Prostate gland (tissue), 2 donors: ENCODE measurements at regions of chr11 and their contacts with region 1.

Region 1: GRCh38 chr11:11848891-11849746 is 7.3 kb downstream of the USP47 start:
- DNase-seq: peak; percentile 47
- H3K4me3 ChIP-seq: no peak overlapping the region
- H3K27ac ChIP-seq: peak overlapping the region in 1 of 2 donors; percentile 2
- H3K4me1 ChIP-seq: peaks cover 16% of the 10 kb centered on the region
- H3K27me3 ChIP-seq: no peaks in the 10 kb centered on the region
- CTCF ChIP-seq: peak in 3 of 4 experiments; percentile 28 to 55 (median 46)
- POLR2A ChIP-seq: no peak

Region 2: GRCh38 chr11:11163236-11163635 is 685.9 kb before region 1 on chr11:
- intact Hi-C with region 1: no loop called
- DNase-seq: no peak
- H3K4me3 ChIP-seq: no peak overlapping the region
- H3K27ac ChIP-seq: no peak overlapping the region
- H3K4me1 ChIP-seq: no peaks in the 10 kb centered on the region
- H3K27me3 ChIP-seq: no peaks in the 10 kb centered on the region
- CTCF ChIP-seq: peak in 1 of 4 experiments; percentile 9
- POLR2A ChIP-seq: no peak

Region 3: DNA sequence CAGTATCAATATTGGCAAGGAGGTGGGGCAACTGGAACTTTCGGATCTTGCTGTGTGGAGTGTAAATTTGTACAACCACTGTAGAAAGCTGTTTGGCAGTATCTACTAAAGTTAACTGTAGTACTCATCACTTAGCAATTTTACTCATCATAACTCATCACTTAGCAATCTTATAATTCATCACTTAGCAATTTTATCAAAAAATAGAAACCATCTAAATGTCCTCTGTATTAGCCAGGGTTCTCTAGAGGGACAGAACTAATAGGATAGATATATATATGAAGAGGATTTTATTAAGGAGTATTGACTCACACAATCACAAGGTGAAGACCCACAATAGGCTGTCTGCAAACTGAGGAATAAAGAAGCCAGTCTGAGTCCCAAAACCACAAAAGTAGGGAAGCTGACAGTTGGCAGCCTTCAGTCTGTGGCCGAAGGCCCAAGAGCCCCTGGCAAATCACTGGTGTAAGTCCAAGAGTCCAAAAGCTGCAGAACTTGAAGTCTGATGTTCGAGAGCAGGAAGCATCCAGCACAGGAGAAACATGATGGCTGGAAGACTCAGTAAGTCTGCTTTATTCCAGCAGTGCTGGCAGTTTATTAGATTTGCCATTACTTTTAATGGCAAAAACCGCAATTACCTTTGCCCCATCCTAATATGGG is 100.3 kb before region 1 on chr11:
- intact Hi-C with region 1: no loop called
- DNase-seq: no peak
- H3K4me3 ChIP-seq: no peak overlapping the region
- H3K27ac ChIP-seq: no peak overlapping the region
- H3K4me1 ChIP-seq: no peaks in the 10 kb centered on the region
- H3K27me3 ChIP-seq: no peaks in the 10 kb centered on the region
- CTCF ChIP-seq: no peak
- POLR2A ChIP-seq: no peak

Region 4: GRCh38 chr11:11782532-11783110 is 66.5 kb before region 1 on chr11:
- intact Hi-C with region 1: no loop called
- DNase-seq: peak; percentile 88
- H3K4me3 ChIP-seq: no peak overlapping the region
- H3K27ac ChIP-seq: no peak overlapping the region
- H3K4me1 ChIP-seq: no peaks in the 10 kb centered on the region
- H3K27me3 ChIP-seq: no peaks in the 10 kb centered on the region
- CTCF ChIP-seq: no peak
- POLR2A ChIP-seq: no peak

Region 5: DNA sequence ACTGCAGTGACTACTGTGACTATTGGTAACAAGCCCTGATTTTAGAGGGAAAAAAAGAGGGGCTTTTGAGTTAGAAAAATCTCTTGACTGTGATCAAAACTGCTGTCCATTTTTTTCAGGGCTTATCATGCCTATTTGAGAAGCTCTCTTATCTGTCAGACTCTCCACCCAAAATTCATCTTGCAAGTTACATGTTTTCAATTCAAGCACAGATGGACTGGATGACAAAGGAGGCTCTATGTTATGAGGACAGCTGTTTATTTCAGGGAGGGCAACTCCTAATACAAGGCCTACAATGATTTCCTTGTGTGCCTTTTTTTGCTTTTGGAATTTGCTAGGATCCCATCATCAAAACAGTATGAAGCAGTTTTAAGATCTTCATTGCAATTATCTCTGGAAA is 42.5 kb before region 1 on chr11:
- intact Hi-C with region 1: loop called (anchors 5 kb)
- DNase-seq: no peak
- H3K4me3 ChIP-seq: no peak overlapping the region
- H3K27ac ChIP-seq: no peak overlapping the region
- H3K4me1 ChIP-seq: no peaks in the 10 kb centered on the region
- H3K27me3 ChIP-seq: no peaks in the 10 kb centered on the region
- CTCF ChIP-seq: no peak
- POLR2A ChIP-seq: no peak

Region 6: DNA sequence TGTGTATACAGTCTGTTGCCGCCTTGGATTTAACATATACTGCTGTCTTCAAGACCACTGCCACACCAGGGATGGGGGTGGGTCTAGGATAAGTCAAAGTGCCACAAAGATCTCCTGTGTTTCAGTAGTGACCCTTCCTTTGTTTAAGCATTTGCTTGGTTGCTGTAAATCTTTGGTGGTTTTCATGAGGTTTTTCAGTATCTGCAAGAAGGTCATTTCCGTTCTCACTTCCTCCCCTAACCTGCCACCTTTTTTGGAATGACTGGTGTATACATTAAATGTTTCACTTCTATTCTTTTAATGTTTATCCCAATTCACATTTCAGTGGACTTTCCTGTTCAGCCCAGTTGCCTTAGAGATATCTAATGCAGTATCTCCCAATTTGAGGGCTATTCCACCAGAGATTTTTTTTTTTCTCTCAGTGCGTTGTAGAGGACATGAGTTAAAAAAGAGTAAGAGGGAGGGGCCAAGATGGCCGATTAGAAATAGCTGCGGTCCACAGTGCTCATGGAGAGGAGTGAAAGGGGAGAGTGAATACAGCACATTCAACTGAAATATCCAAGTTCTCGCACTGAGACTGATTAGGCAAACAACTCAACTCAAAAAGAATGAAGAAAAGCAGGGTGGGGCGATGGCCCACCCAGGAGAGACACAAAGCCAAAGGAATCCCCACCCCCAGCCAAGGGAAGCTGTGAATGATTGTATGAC is 35.8 kb after region 1 on chr11:
- intact Hi-C with region 1: no loop called
- DNase-seq: no peak
- H3K4me3 ChIP-seq: no peak overlapping the region
- H3K27ac ChIP-seq: no peak overlapping the region
- H3K4me1 ChIP-seq: peaks cover 2% of the 10 kb centered on the region
- H3K27me3 ChIP-seq: no peaks in the 10 kb centered on the region
- CTCF ChIP-seq: no peak
- POLR2A ChIP-seq: no peak